ENCODE measurements at regions of chr17 and their contacts with region 1.

Region 1: DNA sequence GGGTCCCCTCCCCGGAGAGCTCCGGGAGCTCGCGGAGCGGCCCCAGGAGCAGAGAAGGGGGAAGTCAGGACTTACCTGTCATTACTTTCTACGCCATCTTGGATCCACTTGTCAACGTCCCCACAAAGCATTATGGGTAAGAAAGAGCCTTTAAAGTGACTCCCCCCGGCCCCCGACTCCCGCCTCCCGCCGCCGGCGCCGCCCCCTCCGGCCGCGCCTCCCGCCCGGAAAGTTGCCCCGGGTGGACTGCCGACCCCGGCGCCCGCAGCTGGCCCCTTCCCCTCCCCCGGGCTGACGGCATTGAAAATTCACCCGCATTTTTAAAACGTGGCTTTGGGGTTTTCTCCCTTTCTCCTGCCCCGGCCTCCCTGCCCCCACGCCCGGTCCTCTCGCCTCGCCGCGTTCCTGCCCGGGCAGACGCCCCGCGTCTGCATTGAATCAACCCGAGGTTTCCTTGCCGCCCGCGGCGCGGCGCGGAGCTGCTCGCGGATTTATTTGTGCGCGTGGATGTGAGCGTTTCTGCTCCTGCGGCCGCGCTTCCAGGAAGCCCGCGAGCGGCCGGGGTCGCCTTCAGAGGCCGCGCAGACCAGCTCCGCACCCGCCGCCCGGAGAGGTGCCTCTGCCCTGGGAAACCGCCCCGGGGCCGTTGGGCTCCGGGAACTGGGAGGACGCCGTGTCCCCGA is at the start of gene HELZ:
- DNase-seq: peak; percentile 78
- H3K4me3 Mint-ChIP-seq: peak within 1 kb of the TSS; percentile 87
- H3K27ac Mint-ChIP-seq: peak within 1 kb of the TSS; percentile 97
- H3K4me1 Mint-ChIP-seq: peaks cover 59% of the 10 kb centered on the region
- H3K27me3 Mint-ChIP-seq: no peaks in the 10 kb centered on the region
- total RNA-seq, gene HELZ: 98.2 to 109 TPM

Region 2: GRCh38 chr17:67221062-67221998 is 23.9 kb before region 1 on chr17:
- CTCF ChIA-PET with region 1: no interaction called
- POLR2A ChIA-PET with region 1: interaction called, 13 read pairs
- DNase-seq: peak; percentile 54
- H3K4me3 Mint-ChIP-seq: no peak overlapping the region
- H3K27ac Mint-ChIP-seq: no peak overlapping the region
- H3K4me1 Mint-ChIP-seq: peaks cover 35% of the 10 kb centered on the region
- H3K27me3 Mint-ChIP-seq: no peaks in the 10 kb centered on the region

Region 3: DNA sequence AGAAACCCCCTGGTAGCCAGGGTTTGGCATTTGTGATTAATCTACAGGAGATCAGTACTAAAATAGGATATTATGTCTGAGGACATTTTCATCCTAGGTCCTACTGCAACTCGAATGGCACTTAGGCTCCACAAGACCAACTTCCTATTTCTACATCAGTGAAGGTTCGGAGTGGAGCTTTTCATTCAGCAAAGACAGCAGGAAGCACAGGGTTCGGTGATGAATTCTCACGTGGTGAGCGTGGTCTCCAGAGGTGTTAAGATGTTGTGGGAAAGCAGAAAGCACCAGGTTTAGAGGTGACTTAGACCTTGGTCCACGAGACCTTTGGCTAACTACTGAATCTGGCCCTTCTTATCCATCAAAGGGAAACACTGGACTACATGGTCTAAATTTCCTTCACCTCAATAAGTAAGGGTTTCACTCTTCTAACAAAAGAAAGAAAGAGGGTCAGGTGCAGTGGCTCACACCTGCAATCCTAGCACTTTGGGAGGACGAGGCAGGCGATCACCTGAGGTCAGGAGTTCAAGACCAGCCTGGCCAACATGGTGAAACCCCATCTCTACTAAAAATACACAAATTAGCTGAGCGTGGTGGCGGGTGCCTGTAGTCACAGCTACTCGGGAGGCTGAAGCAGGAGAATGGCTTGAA is 13.7 kb after region 1 on chr17:
- CTCF ChIA-PET with region 1: interaction called, 7 read pairs
- POLR2A ChIA-PET with region 1: interaction called, 36 read pairs
- DNase-seq: peak; percentile 65
- H3K4me3 Mint-ChIP-seq: peak overlapping the region; percentile 7
- H3K27ac Mint-ChIP-seq: peak overlapping the region; percentile 90
- H3K4me1 Mint-ChIP-seq: peaks cover 65% of the 10 kb centered on the region
- H3K27me3 Mint-ChIP-seq: no peaks in the 10 kb centered on the region

Region 4: GRCh38 chr17:67276075-67276474 is 30.9 kb after region 1 on chr17:
- CTCF ChIA-PET with region 1: no interaction called
- POLR2A ChIA-PET with region 1: no interaction called
- DNase-seq: no peak
- H3K4me3 Mint-ChIP-seq: no peak overlapping the region
- H3K27ac Mint-ChIP-seq: no peak overlapping the region
- H3K4me1 Mint-ChIP-seq: peaks cover 2% of the 10 kb centered on the region
- H3K27me3 Mint-ChIP-seq: peaks cover 3% of the 10 kb centered on the region

Region 5: GRCh38 chr17:67322042-67322787 is 77.0 kb after region 1 on chr17:
- CTCF ChIA-PET with region 1: no interaction called
- POLR2A ChIA-PET with region 1: no interaction called
- DNase-seq: no peak
- H3K4me3 Mint-ChIP-seq: no peak overlapping the region
- H3K27ac Mint-ChIP-seq: no peak overlapping the region
- H3K4me1 Mint-ChIP-seq: no peaks in the 10 kb centered on the region
- H3K27me3 Mint-ChIP-seq: peaks cover 2% of the 10 kb centered on the region

Measured in activated CD4-positive, alpha-beta memory T cell treated with anti-CD3 and anti-CD28 coated beads, Interleukin-2, amount 10 ng/mL, durations not matched to agents 7 days and 5 days (primary cell).